Posterior vena cava (tissue), 2 donors: ENCODE measurements at regions of chr4 and their contacts with region 1.

Region 1: GRCh38 chr4:7192252-7193029 is at the start of gene SORCS2:
- DNase-seq: peak; percentile 89
- total RNA-seq, gene SORCS2: 5.0 to 11.9 TPM

Region 2: GRCh38 chr4:7295911-7296660 is 103.6 kb after region 1 on chr4:
- intact Hi-C with region 1: loop called (anchors 2 kb)
- DNase-seq: no peak